Caco-2 (cell line): ENCODE measurements at regions of chr5 and their contacts with region 1.

Region 1: GRCh38 chr5:112146323-112147226 is 272.5 kb downstream of the EPB41L4A start:
- DNase-seq: peak; percentile 48 to 59
- H3K4me3 ChIP-seq: no peak overlapping the region
- H3K4me3 Mint-ChIP-seq: no peak overlapping the region
- H3K27ac Mint-ChIP-seq: no peak overlapping the region
- H3K4me1 ChIP-seq: no peaks in the 10 kb centered on the region
- H3K4me1 Mint-ChIP-seq: no peaks in the 10 kb centered on the region
- H3K27me3 ChIP-seq: no peaks in the 10 kb centered on the region
- H3K27me3 Mint-ChIP-seq: peaks cover 6% of the 10 kb centered on the region
- CTCF ChIP-seq: peak; percentile 64 to 75

Region 2: DNA sequence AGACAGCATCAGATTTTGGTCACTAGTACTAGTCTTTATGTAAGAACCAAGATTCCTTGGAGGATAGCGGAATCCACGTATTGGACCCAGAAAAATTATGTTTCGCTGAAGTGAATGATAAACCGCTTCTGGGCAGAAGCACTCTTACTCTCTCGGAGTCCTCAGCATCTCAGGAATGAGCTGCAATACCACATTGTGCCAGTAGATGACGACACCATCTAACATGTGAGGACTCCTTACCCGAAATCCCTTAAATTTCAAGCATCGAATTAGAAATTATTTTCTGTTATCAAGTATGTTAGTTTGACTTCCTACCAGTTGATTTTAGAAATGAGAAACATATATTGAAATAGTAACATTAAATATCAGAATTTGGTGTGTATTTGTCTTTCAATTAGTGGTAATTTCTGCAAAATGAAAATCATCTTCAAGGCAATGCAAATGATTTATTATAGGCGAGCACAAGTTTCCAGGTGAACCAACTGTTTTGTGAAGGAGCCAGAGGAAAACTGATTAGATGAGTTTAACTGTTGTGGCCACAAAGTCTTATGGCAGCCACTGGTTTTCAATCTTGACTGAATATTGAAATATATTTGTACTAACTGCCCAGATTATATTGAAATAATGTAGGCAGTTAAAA is 988.4 kb before region 1 on chr5:
- CTCF ChIA-PET with region 1: no interaction called
- POLR2A ChIA-PET with region 1: no interaction called
- intact Hi-C with region 1: loop called (anchors 1 kb)
- DNase-seq: peak; percentile 65 to 75
- H3K4me3 ChIP-seq: no peak overlapping the region
- H3K4me3 Mint-ChIP-seq: no peak overlapping the region
- H3K27ac Mint-ChIP-seq: no peak overlapping the region
- H3K4me1 ChIP-seq: no peaks in the 10 kb centered on the region
- H3K4me1 Mint-ChIP-seq: no peaks in the 10 kb centered on the region
- H3K27me3 ChIP-seq: no peaks in the 10 kb centered on the region
- H3K27me3 Mint-ChIP-seq: peaks cover 10% of the 10 kb centered on the region
- CTCF ChIP-seq: peak; percentile 97 to 99

Region 3: GRCh38 chr5:111530298-111530740 is 616.3 kb before region 1 on chr5:
- CTCF ChIA-PET with region 1: no interaction called
- POLR2A ChIA-PET with region 1: no interaction called
- intact Hi-C with region 1: loop called (anchors 5 kb)
- DNase-seq: peak; percentile 89 to 94
- H3K4me3 ChIP-seq: peak overlapping the region; percentile 26
- H3K4me3 Mint-ChIP-seq: peak overlapping the region; percentile 71
- H3K27ac Mint-ChIP-seq: peak overlapping the region; percentile 91
- H3K4me1 ChIP-seq: peaks cover 9% of the 10 kb centered on the region
- H3K4me1 Mint-ChIP-seq: peaks cover 12% of the 10 kb centered on the region
- H3K27me3 ChIP-seq: no peaks in the 10 kb centered on the region
- H3K27me3 Mint-ChIP-seq: no peaks in the 10 kb centered on the region
- CTCF ChIP-seq: no peak

Region 4: DNA sequence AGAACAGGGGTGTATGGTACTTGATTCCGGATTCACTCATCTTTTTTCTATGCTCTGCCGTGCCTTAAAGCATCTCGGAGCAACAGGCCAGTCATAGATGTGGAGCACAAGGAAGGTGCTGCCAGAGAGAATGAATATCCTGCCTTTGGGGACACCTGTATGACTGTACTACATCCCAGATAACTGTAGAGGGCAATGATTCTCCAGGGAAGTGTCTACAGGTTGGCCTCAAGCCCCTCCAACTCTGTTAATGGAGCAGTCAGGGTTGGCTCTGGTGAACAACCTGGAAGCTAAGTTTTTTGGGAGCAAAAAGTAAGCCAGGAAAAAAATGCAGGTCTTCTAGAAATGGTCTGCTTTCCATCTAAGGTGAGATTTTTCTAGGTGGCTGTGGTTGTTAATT is 460.6 kb before region 1 on chr5:
- CTCF ChIA-PET with region 1: no interaction called
- POLR2A ChIA-PET with region 1: no interaction called
- intact Hi-C with region 1: loop called (anchors 1 kb)
- DNase-seq: peak in 1 of 2 experiments; percentile 7
- H3K4me3 ChIP-seq: no peak overlapping the region
- H3K4me3 Mint-ChIP-seq: no peak overlapping the region
- H3K27ac Mint-ChIP-seq: no peak overlapping the region
- H3K4me1 ChIP-seq: no peaks in the 10 kb centered on the region
- H3K4me1 Mint-ChIP-seq: no peaks in the 10 kb centered on the region
- H3K27me3 ChIP-seq: no peaks in the 10 kb centered on the region
- H3K27me3 Mint-ChIP-seq: peaks cover 1% of the 10 kb centered on the region
- CTCF ChIP-seq: peak; percentile 20 to 29

Region 5: GRCh38 chr5:111834926-111835598 is 311.5 kb before region 1 on chr5:
- CTCF ChIA-PET with region 1: no interaction called
- POLR2A ChIA-PET with region 1: no interaction called
- intact Hi-C with region 1: loop called (anchors 1 kb)
- DNase-seq: no peak
- H3K4me3 ChIP-seq: no peak overlapping the region
- H3K4me3 Mint-ChIP-seq: no peak overlapping the region
- H3K27ac Mint-ChIP-seq: no peak overlapping the region
- H3K4me1 ChIP-seq: no peaks in the 10 kb centered on the region
- H3K4me1 Mint-ChIP-seq: no peaks in the 10 kb centered on the region
- H3K27me3 ChIP-seq: no peaks in the 10 kb centered on the region
- H3K27me3 Mint-ChIP-seq: peaks cover 11% of the 10 kb centered on the region
- CTCF ChIP-seq: no peak